ENCODE measurements at regions of chr16 and their contacts with region 1.

Region 1: GRCh38 chr16:636206-637080 is at the start of gene METTL26:
- DNase-seq: peak; percentile 97
- ATAC-seq: peak; percentile 89
- H3K4me3 Mint-ChIP-seq: peak within 1 kb of the TSS; percentile 87
- H3K27ac Mint-ChIP-seq: peak within 1 kb of the TSS; percentile 91
- H3K4me1 Mint-ChIP-seq: peaks cover 13% of the 10 kb centered on the region
- H3K27me3 Mint-ChIP-seq: no peaks in the 10 kb centered on the region
- total RNA-seq, gene METTL26: 116 to 127 TPM

Region 2: GRCh38 chr16:138049-138417 is 498.4 kb before region 1 on chr16:
- CTCF ChIA-PET with region 1: no interaction called
- POLR2A ChIA-PET with region 1: no interaction called
- intact Hi-C with region 1: loop called in 1 of 2 experiments (anchors 1 kb)
- DNase-seq: peak; percentile 43
- ATAC-seq: peak; percentile 8
- H3K4me3 Mint-ChIP-seq: peak overlapping the region; percentile 78
- H3K27ac Mint-ChIP-seq: peak overlapping the region; percentile 81
- H3K4me1 Mint-ChIP-seq: peaks cover 24% of the 10 kb centered on the region
- H3K27me3 Mint-ChIP-seq: no peaks in the 10 kb centered on the region

Region 3: GRCh38 chr16:352547-353403 is 283.7 kb before region 1 on chr16 and contains the start of gene AXIN1:
- CTCF ChIA-PET with region 1: no interaction called
- POLR2A ChIA-PET with region 1: no interaction called
- intact Hi-C with region 1: loop called in 1 of 2 experiments (anchors 1 kb)
- DNase-seq: peak; percentile 100
- ATAC-seq: peak; percentile 89
- H3K4me3 Mint-ChIP-seq: peak within 1 kb of the TSS; percentile 80
- H3K27ac Mint-ChIP-seq: peak within 1 kb of the TSS; percentile 79
- H3K4me1 Mint-ChIP-seq: peaks cover 45% of the 10 kb centered on the region
- H3K27me3 Mint-ChIP-seq: no peaks in the 10 kb centered on the region
- total RNA-seq, gene AXIN1: 20.0 to 23.8 TPM

Region 4: DNA sequence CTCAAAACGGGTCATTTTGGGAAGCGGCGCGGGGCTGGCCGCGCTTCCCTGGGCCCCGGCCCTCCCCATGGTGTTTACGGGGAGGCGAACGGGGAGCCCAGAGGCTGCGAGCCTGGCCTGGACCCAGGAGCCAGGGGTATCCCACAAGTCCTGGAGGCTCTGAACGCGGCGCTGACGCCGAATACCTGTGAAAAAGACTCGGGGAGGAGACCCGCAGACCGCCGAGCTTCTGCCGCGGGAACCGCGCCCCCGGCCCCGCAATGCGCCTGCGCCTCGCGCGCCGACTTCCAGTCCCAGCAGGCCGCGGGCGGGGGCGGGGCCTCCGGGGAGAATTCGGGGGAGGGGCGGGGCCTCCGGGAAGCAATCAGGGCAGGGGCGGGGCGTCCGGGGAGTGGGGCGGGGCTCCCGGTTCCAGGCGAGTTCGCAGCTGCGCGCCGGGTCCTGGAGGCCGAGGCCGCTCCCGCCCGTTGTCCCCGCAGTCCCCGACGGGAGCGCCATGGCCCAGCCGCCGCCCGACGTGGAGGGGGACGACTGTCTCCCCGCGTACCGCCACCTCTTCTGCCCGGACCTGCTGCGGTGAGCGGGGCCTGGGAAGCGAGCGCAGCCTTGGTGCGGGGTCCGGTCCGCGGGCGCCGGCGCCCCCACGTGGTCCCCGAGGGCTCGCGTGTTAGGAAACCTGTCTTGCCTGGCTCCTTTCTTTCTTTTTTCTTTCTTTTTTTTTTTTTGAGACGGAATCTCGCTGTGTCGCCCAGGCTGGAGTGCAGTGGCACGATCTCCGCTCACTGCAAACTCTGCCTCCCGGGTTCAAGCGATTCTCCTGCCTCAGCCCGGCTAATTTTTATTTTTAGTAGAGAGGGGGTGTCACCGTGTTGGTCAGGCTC is 234.7 kb before region 1 on chr16 and contains the start of gene DECR2:
- CTCF ChIA-PET with region 1: no interaction called
- POLR2A ChIA-PET with region 1: no interaction called
- intact Hi-C with region 1: loop called in 1 of 2 experiments (anchors 1 kb)
- DNase-seq: peak; percentile 100
- ATAC-seq: peak; percentile 87
- H3K4me3 Mint-ChIP-seq: peak within 1 kb of the TSS; percentile 82
- H3K27ac Mint-ChIP-seq: peak within 1 kb of the TSS; percentile 87
- H3K4me1 Mint-ChIP-seq: peaks cover 10% of the 10 kb centered on the region
- H3K27me3 Mint-ChIP-seq: no peaks in the 10 kb centered on the region
- total RNA-seq, gene DECR2: 11.5 to 13.0 TPM

Region 5: GRCh38 chr16:569445-570254 is 66.8 kb before region 1 on chr16 and contains the start of gene PIGQ:
- CTCF ChIA-PET with region 1: no interaction called
- POLR2A ChIA-PET with region 1: interaction called, 6 read pairs
- intact Hi-C with region 1: loop called in 1 of 2 experiments (anchors 1 kb)
- DNase-seq: peak; percentile 79
- ATAC-seq: peak; percentile 70
- H3K4me3 Mint-ChIP-seq: peak within 1 kb of the TSS; percentile 79
- H3K27ac Mint-ChIP-seq: peak within 1 kb of the TSS; percentile 92
- H3K4me1 Mint-ChIP-seq: peaks cover 26% of the 10 kb centered on the region
- H3K27me3 Mint-ChIP-seq: no peaks in the 10 kb centered on the region
- total RNA-seq, gene PIGQ: 24.2 to 24.7 TPM

Region 6: DNA sequence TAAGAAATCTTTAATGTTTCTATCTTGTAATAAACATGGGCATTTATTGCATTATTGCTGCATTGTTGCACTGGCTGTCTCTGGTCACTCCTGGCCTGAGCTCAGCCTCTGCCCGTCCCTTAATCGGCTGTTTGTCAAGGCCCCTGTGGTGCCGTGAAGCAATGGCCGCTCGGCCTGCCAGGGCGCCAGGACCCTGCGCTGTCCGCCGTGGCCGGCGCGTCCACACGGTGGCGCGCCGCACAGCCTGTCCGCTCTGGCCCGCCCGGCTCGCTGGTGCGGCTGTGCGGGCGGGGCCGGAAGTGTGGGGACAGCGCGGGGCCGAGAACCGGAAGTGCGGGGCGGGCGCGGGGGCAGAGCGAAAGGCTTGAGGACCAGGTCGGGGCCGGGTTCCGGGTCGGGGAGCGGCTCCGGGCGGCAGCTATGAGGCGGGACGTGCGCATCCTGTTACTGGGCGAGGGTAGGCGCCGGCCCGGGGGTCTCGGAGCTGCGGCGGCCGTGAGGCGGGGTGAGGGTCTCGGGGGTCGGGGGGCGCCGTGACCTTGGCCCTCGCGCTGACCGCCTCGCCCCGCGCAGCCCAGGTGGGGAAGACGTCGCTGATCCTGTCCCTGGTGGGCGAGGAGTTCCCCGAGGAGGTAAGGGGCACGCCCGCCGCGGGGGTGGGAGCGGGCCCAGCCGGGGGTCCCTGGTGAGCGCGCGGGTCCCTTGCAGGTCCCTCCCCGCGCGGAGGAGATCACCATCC is 31.5 kb after region 1 on chr16 and contains the start of gene RHOT2:
- CTCF ChIA-PET with region 1: no interaction called
- POLR2A ChIA-PET with region 1: no interaction called
- intact Hi-C with region 1: loop called in 1 of 2 experiments (anchors 1 kb)
- DNase-seq: peak; percentile 96
- ATAC-seq: peak; percentile 98
- H3K4me3 Mint-ChIP-seq: peak within 1 kb of the TSS; percentile 76
- H3K27ac Mint-ChIP-seq: peak within 1 kb of the TSS; percentile 85
- H3K4me1 Mint-ChIP-seq: peaks cover 6% of the 10 kb centered on the region
- H3K27me3 Mint-ChIP-seq: no peaks in the 10 kb centered on the region
- total RNA-seq, gene RHOT2: 123 to 130 TPM

Region 7: GRCh38 chr16:807347-808084 is 171.1 kb after region 1 on chr16:
- CTCF ChIA-PET with region 1: no interaction called
- POLR2A ChIA-PET with region 1: no interaction called
- intact Hi-C with region 1: loop called in 1 of 2 experiments (anchors 1 kb)
- DNase-seq: peak; percentile 93
- ATAC-seq: peak; percentile 98
- H3K4me3 Mint-ChIP-seq: peak overlapping the region; percentile 96
- H3K27ac Mint-ChIP-seq: peak overlapping the region; percentile 95
- H3K4me1 Mint-ChIP-seq: peaks cover 8% of the 10 kb centered on the region
- H3K27me3 Mint-ChIP-seq: peaks cover 4% of the 10 kb centered on the region